ENCODE measurements at regions of chr5 and their contacts with region 1.

Region 1: DNA sequence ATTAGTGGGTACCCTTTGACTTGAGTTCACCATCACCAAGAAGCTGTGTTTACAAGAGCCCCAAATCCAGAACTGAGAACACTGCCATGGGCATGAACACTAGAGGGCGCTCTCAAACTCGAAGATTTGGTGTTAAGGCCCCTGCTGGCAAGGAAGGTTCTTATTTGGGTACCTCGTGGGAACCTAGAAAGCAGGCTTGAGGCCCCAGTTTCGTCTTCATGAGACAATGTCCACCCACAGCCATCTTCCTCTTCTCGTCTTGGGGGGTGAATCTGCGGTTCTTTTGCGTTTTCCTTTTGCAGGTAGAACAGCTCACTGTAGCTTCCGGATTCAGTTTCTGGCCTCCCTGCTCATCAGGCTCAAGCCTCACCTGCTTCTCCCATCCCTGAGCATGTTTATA is 184.0 kb downstream of the SEMA5A start:
- DNase-seq: peak; percentile 60
- H3K4me3 ChIP-seq: no peak overlapping the region
- H3K27ac ChIP-seq: no peak overlapping the region
- H3K4me1 ChIP-seq: peaks cover 0 to 4% (median 0%) of the 10 kb centered on the region in 4 donors
- H3K27me3 ChIP-seq: no peaks in the 10 kb centered on the region
- CTCF ChIP-seq: peak; percentile 56 to 70 (median 65)
- EP300 ChIP-seq: no peak
- POLR2A ChIP-seq: no peak

Region 2: GRCh38 chr5:7927466-7928375 is 1434.1 kb before region 1 on chr5:
- in situ Hi-C with region 1: no loop called
- intact Hi-C with region 1: no loop called
- DNase-seq: peak; percentile 74
- H3K4me3 ChIP-seq: no peak overlapping the region
- H3K27ac ChIP-seq: no peak overlapping the region
- H3K4me1 ChIP-seq: no peaks in the 10 kb centered on the region
- H3K27me3 ChIP-seq: no peaks in the 10 kb centered on the region
- CTCF ChIP-seq: peak; percentile 64 to 80 (median 74)
- EP300 ChIP-seq: no peak
- POLR2A ChIP-seq: no peak

Region 3: DNA sequence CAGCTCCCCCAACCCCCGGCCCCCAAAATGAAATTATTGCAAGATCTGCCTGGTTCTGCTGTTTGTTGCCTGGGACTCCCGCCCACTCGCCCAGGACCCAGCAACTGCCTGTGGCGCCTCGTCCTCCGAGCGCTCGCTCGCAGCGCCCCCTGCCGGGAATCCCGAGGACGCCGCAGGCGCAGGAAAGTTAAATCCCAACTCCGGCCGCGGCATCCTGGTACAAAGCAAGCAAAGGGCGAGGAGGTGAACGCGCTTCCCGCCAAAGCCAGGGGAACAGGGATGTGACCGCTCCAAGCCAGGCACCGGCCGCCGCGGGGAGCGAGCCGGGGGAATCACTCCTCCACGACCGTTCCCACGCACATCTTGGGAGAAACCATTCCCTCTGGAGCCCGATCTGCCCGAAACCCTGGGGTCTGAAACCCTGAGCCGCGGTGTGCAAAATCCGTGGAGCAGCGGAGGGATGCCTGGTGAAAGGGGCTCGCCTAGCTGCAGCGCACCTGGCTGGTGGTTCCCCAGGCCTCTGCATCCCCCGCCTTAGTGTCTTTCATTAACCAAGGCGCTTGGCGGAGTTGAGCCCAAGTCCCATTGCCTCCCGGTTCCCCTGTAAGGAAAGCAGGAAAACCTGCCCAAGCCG is 182.8 kb after region 1 on chr5:
- in situ Hi-C with region 1: loop called in 2 of 4 experiments (anchors 25 kb)
- intact Hi-C with region 1: loop called (anchors 10 kb)
- DNase-seq: peak; percentile 89
- H3K4me3 ChIP-seq: peak overlapping the region; percentile 47 to 75 (median 68)
- H3K27ac ChIP-seq: peak overlapping the region; percentile 91 to 95 (median 92)
- H3K4me1 ChIP-seq: peaks cover 5 to 30% (median 6%) of the 10 kb centered on the region in 4 donors
- H3K27me3 ChIP-seq: peaks cover 5% of the 10 kb centered on the region
- CTCF ChIP-seq: peak; percentile 86 to 93 (median 92)
- EP300 ChIP-seq: no peak
- POLR2A ChIP-seq: peak; percentile 47